Transverse colon (tissue), 4 donors: ENCODE measurements at regions of chr5 and their contacts with region 1.

Region 1: DNA sequence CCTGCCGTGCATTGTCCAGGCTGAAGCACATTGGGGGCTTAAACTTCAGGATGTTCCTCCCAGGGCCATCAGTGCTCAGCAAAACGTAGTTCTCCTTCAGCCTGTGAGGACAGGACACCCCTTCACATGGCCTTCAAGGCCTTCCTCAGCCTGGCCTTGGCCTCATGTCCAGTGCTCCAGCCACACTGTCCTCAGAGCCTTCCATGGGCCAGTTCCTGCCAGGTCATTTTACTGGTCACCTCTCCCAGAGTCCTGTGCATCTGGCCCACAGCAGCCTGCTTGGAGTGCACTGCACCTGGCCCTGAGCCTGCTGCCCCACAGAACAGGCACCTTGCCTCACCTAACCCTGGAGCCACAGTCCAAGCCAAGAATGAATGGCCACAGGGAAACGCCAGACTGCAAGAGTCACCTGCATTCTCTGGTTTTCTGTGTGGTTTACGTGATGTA is 8.7 kb downstream of the HNRNPAB start:
- DNase-seq: no peak
- H3K4me3 ChIP-seq: no peak overlapping the region
- H3K27ac ChIP-seq: peak overlapping the region; percentile 99
- H3K4me1 ChIP-seq: peaks cover 39 to 86% (median 69%) of the 10 kb centered on the region in 4 donors
- H3K27me3 ChIP-seq: no peaks in the 10 kb centered on the region
- CTCF ChIP-seq: no peak
- EP300 ChIP-seq: no peak
- POLR2A ChIP-seq: peak; percentile 0

Region 2: GRCh38 chr5:177412603-177413233 is 800.3 kb before region 1 on chr5:
- in situ Hi-C with region 1: no loop called
- intact Hi-C with region 1: loop called (anchors 10 kb)
- DNase-seq: no peak
- H3K4me3 ChIP-seq: no peak overlapping the region
- H3K27ac ChIP-seq: peak overlapping the region; percentile 26 to 61 (median 37)
- H3K4me1 ChIP-seq: peaks cover 0 to 11% (median 0%) of the 10 kb centered on the region in 4 donors
- H3K27me3 ChIP-seq: no peaks in the 10 kb centered on the region
- CTCF ChIP-seq: no peak
- EP300 ChIP-seq: no peak
- POLR2A ChIP-seq: no peak